H1 (cell line): ENCODE measurements at regions of chr1 and their contacts with region 1.

Region 1: GRCh38 chr1:216119602-216120001 is 303.6 kb downstream of the USH2A start:
- DNase-seq: no peak
- H3K4me3 ChIP-seq: no peak overlapping the region
- H3K27ac ChIP-seq: no peak overlapping the region
- H3K4me1 ChIP-seq: no peaks in the 10 kb centered on the region; a peak in 1 of 7 replicates
- H3K27me3 ChIP-seq: peaks cover 0 to 2% (median 0%) of the 10 kb centered on the region in 4 experiments; a peak in 1 of 7 replicates
- CTCF ChIP-seq: peak in 2 of 3 experiments; percentile 26 to 59; a peak in 2 of 4 replicates
- EP300 ChIP-seq: no peak
- POLR2A ChIP-seq: no peak
- RAD21 ChIP-seq: peak; percentile 27 to 48

Region 2: GRCh38 chr1:215857317-215857716 is 262.3 kb before region 1 on chr1:
- CTCF ChIA-PET with region 1: no interaction called
- POLR2A ChIA-PET with region 1: no interaction called
- DNase-seq: no peak
- H3K4me3 ChIP-seq: no peak overlapping the region
- H3K27ac ChIP-seq: no peak overlapping the region
- H3K4me1 ChIP-seq: no peaks in the 10 kb centered on the region
- H3K27me3 ChIP-seq: no peaks in the 10 kb centered on the region
- CTCF ChIP-seq: no peak
- EP300 ChIP-seq: no peak
- POLR2A ChIP-seq: no peak
- RAD21 ChIP-seq: no peak

Region 3: GRCh38 chr1:216005916-216006315 is 113.7 kb before region 1 on chr1:
- CTCF ChIA-PET with region 1: no interaction called
- POLR2A ChIA-PET with region 1: no interaction called
- DNase-seq: no peak
- H3K4me3 ChIP-seq: no peak overlapping the region
- H3K27ac ChIP-seq: no peak overlapping the region
- H3K4me1 ChIP-seq: no peaks in the 10 kb centered on the region
- H3K27me3 ChIP-seq: no peaks in the 10 kb centered on the region
- CTCF ChIP-seq: no peak
- EP300 ChIP-seq: no peak
- POLR2A ChIP-seq: no peak
- RAD21 ChIP-seq: no peak

Region 4: GRCh38 chr1:216144661-216145450 is 25.3 kb after region 1 on chr1:
- CTCF ChIA-PET with region 1: interaction called, 13 read pairs
- POLR2A ChIA-PET with region 1: no interaction called
- DNase-seq: no peak
- H3K4me3 ChIP-seq: no peak overlapping the region
- H3K27ac ChIP-seq: no peak overlapping the region
- H3K4me1 ChIP-seq: peaks cover 3 to 11% (median 9%) of the 10 kb centered on the region in 4 experiments; a peak in 6 of 7 replicates
- H3K27me3 ChIP-seq: no peaks in the 10 kb centered on the region
- CTCF ChIP-seq: no peak
- EP300 ChIP-seq: no peak
- POLR2A ChIP-seq: no peak
- RAD21 ChIP-seq: no peak

Region 5: GRCh38 chr1:216238844-216239243 is 119.2 kb after region 1 on chr1:
- CTCF ChIA-PET with region 1: no interaction called
- POLR2A ChIA-PET with region 1: no interaction called
- DNase-seq: no peak
- H3K4me3 ChIP-seq: no peak overlapping the region
- H3K27ac ChIP-seq: no peak overlapping the region
- H3K4me1 ChIP-seq: no peaks in the 10 kb centered on the region
- H3K27me3 ChIP-seq: no peaks in the 10 kb centered on the region
- CTCF ChIP-seq: no peak
- EP300 ChIP-seq: no peak
- POLR2A ChIP-seq: no peak
- RAD21 ChIP-seq: no peak

Region 6: DNA sequence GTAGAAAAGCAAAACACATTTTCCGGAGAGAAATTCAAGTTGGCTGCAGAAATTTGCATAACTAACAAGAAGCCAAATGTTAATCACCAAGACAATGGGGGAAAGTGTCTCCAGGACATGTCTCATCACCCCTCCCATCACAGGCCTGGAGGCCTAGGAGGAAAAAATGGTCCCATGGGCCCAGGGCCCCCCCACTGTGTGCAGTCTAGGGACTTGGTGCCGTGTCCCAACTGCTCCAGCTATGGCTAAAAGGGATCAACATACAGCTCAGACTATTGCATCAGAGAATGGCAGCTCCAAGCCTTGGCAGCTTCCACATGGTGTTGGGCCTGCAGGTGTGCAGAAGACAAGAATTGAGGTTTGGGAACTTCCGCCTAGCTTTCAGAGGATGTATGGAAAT is 165.4 kb after region 1 on chr1:
- CTCF ChIA-PET with region 1: no interaction called
- POLR2A ChIA-PET with region 1: no interaction called
- DNase-seq: no peak
- H3K4me3 ChIP-seq: no peak overlapping the region
- H3K27ac ChIP-seq: no peak overlapping the region
- H3K4me1 ChIP-seq: no peaks in the 10 kb centered on the region
- H3K27me3 ChIP-seq: no peaks in the 10 kb centered on the region
- CTCF ChIP-seq: no peak
- EP300 ChIP-seq: no peak
- POLR2A ChIP-seq: no peak
- RAD21 ChIP-seq: no peak